Activated CD4-positive, alpha-beta T cell treated with anti-CD3 and anti-CD28 coated beads for 36 hours (primary cell): ENCODE measurements at regions of chr7 and their contacts with region 1.

Region 1: DNA sequence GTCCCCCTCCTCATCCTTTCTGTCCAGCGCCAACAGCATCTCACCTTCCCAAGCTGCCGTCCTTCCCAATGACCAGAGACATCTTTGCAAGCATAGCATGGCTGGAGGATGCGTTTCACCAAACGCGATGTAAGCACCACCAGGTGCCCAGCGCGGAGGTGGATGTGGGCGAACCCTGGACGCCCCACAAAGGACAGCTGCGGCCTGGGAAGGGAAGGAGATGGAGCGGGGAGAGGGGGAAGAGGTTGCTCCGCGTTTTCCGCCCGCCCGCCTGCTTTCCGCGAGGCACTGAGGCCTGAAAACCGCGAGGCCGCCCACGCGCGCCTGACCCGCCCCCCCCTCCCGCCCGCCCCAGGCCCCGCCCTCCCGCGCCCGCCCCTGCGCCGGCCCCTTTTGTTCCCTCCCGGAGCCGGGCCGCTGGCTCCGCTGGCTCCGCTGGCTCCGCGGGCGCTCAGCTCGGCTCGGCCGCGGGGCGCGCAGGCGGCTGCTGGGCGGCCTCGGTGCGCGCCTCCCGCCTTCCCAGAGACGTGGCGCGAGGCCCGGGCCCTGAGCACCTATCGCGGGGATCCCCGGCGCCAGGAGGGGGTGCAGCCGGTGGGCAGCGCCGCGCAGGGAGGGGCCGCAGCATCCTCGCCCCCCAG is at the start of gene CLIP2:
- DNase-seq: peak; percentile 87
- ATAC-seq: peak; percentile 93
- H3K4me3 Mint-ChIP-seq: peak within 1 kb of the TSS; percentile 73
- H3K27ac Mint-ChIP-seq: peak within 1 kb of the TSS; percentile 60
- H3K4me1 Mint-ChIP-seq: peaks cover 16% of the 10 kb centered on the region
- H3K27me3 Mint-ChIP-seq: peaks cover 15% of the 10 kb centered on the region
- total RNA-seq, gene CLIP2: 1.4 to 1.8 TPM

Region 2: GRCh38 chr7:73446682-73447081 is 842.5 kb before region 1 on chr7:
- CTCF ChIA-PET with region 1: no interaction called
- POLR2A ChIA-PET with region 1: no interaction called
- intact Hi-C with region 1: no loop called
- DNase-seq: no peak
- ATAC-seq: no peak
- H3K4me3 Mint-ChIP-seq: no peak overlapping the region
- H3K27ac Mint-ChIP-seq: no peak overlapping the region
- H3K4me1 Mint-ChIP-seq: peaks cover 6% of the 10 kb centered on the region
- H3K27me3 Mint-ChIP-seq: no peaks in the 10 kb centered on the region

Region 3: GRCh38 chr7:73828107-73828803 is 460.9 kb before region 1 on chr7:
- CTCF ChIA-PET with region 1: no interaction called
- POLR2A ChIA-PET with region 1: no interaction called
- intact Hi-C with region 1: no loop called
- DNase-seq: peak; percentile 50
- ATAC-seq: peak; percentile 95
- H3K4me3 Mint-ChIP-seq: no peak overlapping the region
- H3K27ac Mint-ChIP-seq: no peak overlapping the region
- H3K4me1 Mint-ChIP-seq: peaks cover 26% of the 10 kb centered on the region
- H3K27me3 Mint-ChIP-seq: peaks cover 5% of the 10 kb centered on the region

Region 4: DNA sequence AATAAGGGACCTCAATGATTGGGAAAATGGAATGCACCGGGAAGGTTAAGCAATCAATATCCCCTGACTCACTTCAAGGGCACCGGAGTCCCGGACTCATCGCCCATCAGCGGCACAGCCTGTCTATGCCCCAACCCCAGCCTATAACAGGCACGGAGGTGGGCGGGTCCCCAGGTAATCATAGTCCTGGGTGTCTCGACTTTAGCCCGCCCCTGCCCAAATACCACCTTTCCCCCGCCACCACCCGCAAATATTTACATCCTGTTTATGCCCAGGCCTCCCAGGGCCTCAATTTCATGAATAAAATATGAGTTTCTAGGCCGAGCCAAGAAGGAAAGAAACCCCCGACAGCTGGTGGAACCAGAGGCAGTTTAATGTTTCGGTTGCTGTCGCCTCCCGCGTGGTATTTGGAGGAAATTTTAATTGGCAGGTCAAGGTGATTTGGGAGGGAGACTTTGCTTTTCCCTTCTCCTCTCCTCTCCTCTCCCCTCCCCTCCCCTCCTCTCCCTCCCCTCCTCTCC is 19.3 kb before region 1 on chr7:
- CTCF ChIA-PET with region 1: interaction called, 13 read pairs
- POLR2A ChIA-PET with region 1: no interaction called
- intact Hi-C with region 1: loop called (anchors 1 kb)
- DNase-seq: peak; percentile 70
- ATAC-seq: peak; percentile 90
- H3K4me3 Mint-ChIP-seq: peak overlapping the region; percentile 68
- H3K27ac Mint-ChIP-seq: no peak overlapping the region
- H3K4me1 Mint-ChIP-seq: peaks cover 9% of the 10 kb centered on the region
- H3K27me3 Mint-ChIP-seq: no peaks in the 10 kb centered on the region

Region 5: DNA sequence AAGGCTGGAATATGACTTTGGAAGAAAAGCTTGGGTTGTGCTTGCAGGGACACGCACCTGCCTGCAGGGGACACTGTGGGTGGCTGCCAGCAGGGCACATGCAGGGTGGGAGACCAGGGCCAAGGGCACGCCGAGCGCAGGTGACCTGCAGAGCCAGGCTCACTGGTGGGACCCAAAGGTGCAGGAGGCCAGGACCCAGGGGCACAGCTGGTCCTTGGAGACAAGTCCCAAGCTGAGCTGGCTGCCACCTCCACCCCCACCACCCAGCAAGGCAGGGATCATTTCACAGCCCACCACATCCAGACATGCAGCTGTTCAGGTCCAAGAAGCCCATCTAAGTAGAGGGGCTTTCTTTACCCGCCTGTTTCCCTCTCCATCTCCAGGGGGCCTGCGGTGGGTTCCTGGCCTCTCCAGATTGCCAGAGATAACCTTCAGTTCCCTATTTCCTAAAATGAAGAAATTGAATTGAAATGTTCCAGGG is 13.7 kb before region 1 on chr7:
- CTCF ChIA-PET with region 1: interaction called, 13 read pairs
- POLR2A ChIA-PET with region 1: no interaction called
- intact Hi-C with region 1: no loop called
- DNase-seq: peak; percentile 34
- ATAC-seq: no peak
- H3K4me3 Mint-ChIP-seq: no peak overlapping the region
- H3K27ac Mint-ChIP-seq: no peak overlapping the region
- H3K4me1 Mint-ChIP-seq: peaks cover 10% of the 10 kb centered on the region
- H3K27me3 Mint-ChIP-seq: no peaks in the 10 kb centered on the region

Region 6: DNA sequence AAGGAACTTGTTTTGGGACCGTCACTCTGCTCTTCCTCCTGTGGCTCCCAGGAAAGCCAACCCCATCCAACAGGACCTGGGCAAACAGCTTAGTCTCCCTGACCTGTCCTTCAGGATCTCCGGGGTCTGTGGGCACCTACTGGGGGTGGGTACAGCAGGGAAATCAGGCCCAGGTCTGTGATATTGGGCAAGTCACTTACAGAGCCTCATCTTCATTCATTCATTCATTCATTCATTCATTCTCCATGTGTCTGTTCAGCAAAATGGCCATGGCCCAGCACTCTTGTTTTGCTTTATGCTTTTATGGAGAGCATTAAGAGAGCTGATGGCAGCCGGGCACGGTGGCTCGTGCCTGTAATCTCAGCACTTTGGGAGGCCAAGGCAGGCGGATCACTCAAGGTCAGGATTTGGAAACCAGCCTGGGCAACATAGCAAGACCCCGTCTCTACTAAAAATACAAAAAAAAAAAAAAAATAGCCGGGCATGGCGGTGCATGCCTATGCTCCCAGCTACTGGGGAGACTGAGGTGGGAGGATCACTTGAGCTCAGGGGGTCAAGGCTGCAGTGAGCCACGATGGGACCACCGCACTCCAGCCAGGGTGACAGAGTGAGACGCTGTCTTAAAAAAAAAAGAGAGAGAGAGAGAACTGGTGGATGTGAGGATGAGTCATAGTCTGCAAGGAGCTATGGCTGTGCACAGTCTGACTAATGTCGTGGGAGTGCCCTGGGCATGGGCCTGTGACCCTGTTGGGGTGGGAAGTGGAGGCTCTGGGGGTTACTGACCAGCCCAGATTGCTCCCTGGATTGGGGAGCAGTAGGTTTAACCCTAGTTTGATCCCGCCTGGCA is 54.4 kb after region 1 on chr7:
- CTCF ChIA-PET with region 1: no interaction called
- POLR2A ChIA-PET with region 1: no interaction called
- intact Hi-C with region 1: loop called in 1 of 2 experiments (anchors 5 kb)
- DNase-seq: peak; percentile 40
- ATAC-seq: peak; percentile 97
- H3K4me3 Mint-ChIP-seq: no peak overlapping the region
- H3K27ac Mint-ChIP-seq: no peak overlapping the region
- H3K4me1 Mint-ChIP-seq: no peaks in the 10 kb centered on the region
- H3K27me3 Mint-ChIP-seq: no peaks in the 10 kb centered on the region